ENCODE measurements at regions of chr15 and their contacts with region 1.

Region 1: GRCh38 chr15:62444104-62445022 is 279.3 kb upstream of the C2CD4B start:
- DNase-seq: no peak
- H3K4me3 ChIP-seq: no peak overlapping the region
- H3K27ac ChIP-seq: peak overlapping the region; percentile 30 to 76
- H3K4me1 ChIP-seq: no peaks in the 10 kb centered on the region
- H3K27me3 ChIP-seq: no peaks in the 10 kb centered on the region
- CTCF ChIP-seq: no peak
- POLR2A ChIP-seq: no peak

Region 2: GRCh38 chr15:62426387-62426956 is 17.9 kb before region 1 on chr15:
- intact Hi-C with region 1: no loop called
- DNase-seq: no peak
- H3K4me3 ChIP-seq: no peak overlapping the region
- H3K27ac ChIP-seq: no peak overlapping the region
- H3K4me1 ChIP-seq: peaks cover 0 to 4% of the 10 kb centered on the region in 2 donors
- H3K27me3 ChIP-seq: no peaks in the 10 kb centered on the region
- CTCF ChIP-seq: no peak
- POLR2A ChIP-seq: no peak

Region 3: DNA sequence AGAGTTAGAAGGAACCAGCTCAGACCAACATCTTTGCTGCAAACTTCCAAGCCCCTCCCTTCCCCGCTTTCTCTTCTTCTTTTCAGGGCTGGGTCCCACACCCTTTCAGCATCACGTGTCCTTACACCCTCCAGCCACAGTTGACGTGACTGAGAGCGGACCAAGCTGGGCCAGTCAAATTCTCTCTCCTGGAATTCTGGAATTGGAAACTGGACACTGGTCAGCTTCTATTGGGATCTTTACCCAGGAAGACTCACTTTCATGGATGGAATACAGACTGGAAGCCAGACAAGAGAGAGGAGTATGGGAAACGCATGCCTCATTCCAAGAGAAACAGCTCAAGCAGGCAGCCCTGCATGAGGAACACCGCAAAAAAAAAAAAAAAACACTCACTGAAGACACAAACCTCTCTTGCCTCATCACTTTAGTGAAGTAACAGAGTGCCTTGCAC is 585.8 kb after region 1 on chr15:
- intact Hi-C with region 1: loop called (anchors 5 kb)
- DNase-seq: no peak
- H3K4me3 ChIP-seq: no peak overlapping the region
- H3K27ac ChIP-seq: no peak overlapping the region
- H3K4me1 ChIP-seq: no peaks in the 10 kb centered on the region
- H3K27me3 ChIP-seq: no peaks in the 10 kb centered on the region
- CTCF ChIP-seq: no peak
- POLR2A ChIP-seq: no peak

Region 4: DNA sequence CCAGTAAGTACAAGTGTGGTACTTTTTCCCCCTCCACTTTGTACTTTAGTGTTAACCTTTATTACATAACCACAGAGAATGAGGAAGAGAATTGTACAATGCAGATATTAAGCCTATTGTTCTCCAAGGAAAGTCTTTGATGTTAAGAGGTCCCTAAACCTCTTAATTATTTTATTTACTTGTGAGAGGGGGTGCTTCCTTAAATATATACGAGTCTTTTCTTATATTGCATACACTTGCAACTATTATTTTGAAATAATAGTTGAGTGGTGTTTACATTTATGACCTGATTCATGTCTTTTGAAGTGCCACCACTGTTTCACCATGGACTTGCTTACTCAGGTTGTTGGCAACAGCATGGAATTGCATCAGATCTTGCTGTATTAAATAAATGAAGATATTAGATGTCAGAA is 1070.2 kb after region 1 on chr15:
- intact Hi-C with region 1: no loop called
- DNase-seq: no peak
- H3K4me3 ChIP-seq: no peak overlapping the region
- H3K27ac ChIP-seq: no peak overlapping the region
- H3K4me1 ChIP-seq: peaks cover 0 to 23% of the 10 kb centered on the region in 2 donors
- H3K27me3 ChIP-seq: no peaks in the 10 kb centered on the region
- CTCF ChIP-seq: no peak
- POLR2A ChIP-seq: no peak

Measured in breast epithelium (tissue), 4 donors.